PC-3 (cell line): ENCODE measurements at regions of chr4 and their contacts with region 1.

Region 1: GRCh38 chr4:1746265-1746691 is 25.0 kb downstream of the TACC3 start:
- DNase-seq: peak; percentile 59
- ATAC-seq: peak; percentile 76
- H3K4me3 ChIP-seq: no peak overlapping the region
- H3K27ac ChIP-seq: no peak overlapping the region
- H3K4me1 ChIP-seq: no peaks in the 10 kb centered on the region
- H3K27me3 ChIP-seq: no peaks in the 10 kb centered on the region
- CTCF ChIP-seq: peak; percentile 71

Region 2: GRCh38 chr4:1666391-1666790 is 79.9 kb before region 1 on chr4:
- CTCF ChIA-PET with region 1: no interaction called
- POLR2A ChIA-PET with region 1: no interaction called
- intact Hi-C with region 1: no loop called
- DNase-seq: no peak
- ATAC-seq: no peak
- H3K4me3 ChIP-seq: no peak overlapping the region
- H3K27ac ChIP-seq: no peak overlapping the region
- H3K4me1 ChIP-seq: no peaks in the 10 kb centered on the region
- H3K27me3 ChIP-seq: no peaks in the 10 kb centered on the region
- CTCF ChIP-seq: no peak

Region 3: DNA sequence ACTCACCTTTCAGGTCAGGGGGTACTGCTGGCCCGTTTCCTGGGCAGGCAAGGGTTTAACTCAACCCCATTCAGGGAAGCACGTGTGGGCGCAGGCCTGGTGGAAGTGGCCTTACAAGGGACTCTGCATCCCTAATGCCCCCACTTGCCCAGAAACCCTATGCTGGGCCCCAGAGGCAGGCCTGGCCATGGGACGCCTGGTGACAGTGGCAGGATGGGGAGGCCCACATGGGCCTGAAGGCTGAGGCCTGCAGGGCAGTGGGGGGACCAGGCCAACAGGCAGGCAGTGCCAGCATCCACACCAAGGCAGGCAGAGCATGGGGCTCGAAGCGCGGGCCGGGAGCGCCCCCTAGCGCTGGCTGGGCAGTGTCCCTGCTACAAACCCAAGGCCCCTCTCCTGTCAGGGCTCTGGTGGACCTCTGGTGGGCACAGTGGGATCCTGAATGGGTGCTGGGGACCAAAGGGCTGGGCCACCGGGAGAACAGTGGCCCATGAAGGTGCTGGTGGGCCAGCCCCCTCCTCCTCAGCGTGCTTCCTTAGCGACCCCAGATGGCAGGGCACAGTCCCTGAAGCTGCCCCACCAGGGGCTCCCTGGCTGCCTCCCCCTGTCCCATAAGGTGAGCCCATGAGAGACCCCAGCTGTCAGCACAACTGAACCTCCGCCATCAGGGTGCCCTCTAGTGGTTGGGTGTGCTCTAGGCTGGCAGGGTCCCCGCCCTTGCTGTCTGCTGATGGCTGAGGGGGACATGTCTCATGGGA is 63.7 kb after region 1 on chr4:
- CTCF ChIA-PET with region 1: no interaction called
- POLR2A ChIA-PET with region 1: no interaction called
- intact Hi-C with region 1: loop called (anchors 1 kb)
- DNase-seq: peak; percentile 48
- ATAC-seq: peak; percentile 83
- H3K4me3 ChIP-seq: no peak overlapping the region
- H3K27ac ChIP-seq: no peak overlapping the region
- H3K4me1 ChIP-seq: no peaks in the 10 kb centered on the region
- H3K27me3 ChIP-seq: no peaks in the 10 kb centered on the region
- CTCF ChIP-seq: peak; percentile 81

Region 4: DNA sequence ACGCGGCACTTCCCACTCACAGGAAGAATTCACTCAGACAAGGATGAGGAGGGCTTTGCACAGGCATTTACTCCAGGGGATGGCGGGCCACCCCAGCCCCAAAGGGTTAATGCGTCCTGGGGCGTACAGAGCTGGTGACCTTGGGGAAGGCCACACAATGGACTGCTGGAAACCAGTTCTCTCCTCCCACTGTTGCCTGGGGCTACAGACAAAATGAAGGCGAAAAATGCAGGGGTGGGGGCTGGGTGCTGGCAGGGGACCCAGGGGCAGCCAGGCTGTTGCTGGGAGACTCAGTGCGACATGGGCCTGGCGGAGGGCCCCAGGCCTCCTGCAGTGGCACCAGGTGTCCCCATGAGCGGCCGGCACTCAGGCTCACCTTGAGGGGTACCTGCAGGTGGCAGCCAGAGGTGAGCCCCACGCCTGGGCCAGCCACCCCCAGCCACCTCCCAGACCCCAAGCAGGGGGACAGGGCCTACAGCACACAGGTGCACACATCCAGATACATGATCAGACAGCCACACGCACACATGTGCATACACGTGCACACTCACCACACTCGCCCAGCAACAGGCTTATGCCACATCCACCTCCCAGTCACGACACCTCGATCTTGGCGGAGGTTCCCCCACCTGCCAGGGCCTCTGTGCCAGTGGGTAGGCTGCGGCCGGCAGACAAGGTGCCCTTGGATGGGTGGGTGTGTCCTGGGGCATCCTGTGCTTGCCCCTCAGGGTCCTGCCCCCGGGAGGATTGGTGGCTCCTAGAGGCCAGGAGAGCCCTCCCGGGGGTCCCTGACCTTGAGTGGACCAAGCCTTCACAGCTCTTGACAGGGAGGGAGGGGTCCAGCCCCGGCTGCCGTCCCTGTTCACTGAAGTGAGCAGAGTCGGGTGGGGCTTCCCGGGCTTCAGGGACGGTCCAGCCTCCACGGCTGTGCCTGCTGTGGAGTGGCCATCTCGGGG is 325.9 kb after region 1 on chr4:
- CTCF ChIA-PET with region 1: no interaction called
- POLR2A ChIA-PET with region 1: no interaction called
- intact Hi-C with region 1: no loop called
- DNase-seq: no peak
- ATAC-seq: no peak
- H3K4me3 ChIP-seq: no peak overlapping the region
- H3K27ac ChIP-seq: no peak overlapping the region
- H3K4me1 ChIP-seq: no peaks in the 10 kb centered on the region
- H3K27me3 ChIP-seq: no peaks in the 10 kb centered on the region
- CTCF ChIP-seq: no peak